Caco-2 (cell line): ENCODE measurements at regions of chr10 and their contacts with region 1.

Region 1: GRCh38 chr10:110857265-110858158 is 14.2 kb upstream of the PDCD4 start:
- DNase-seq: peak; percentile 88 to 90
- H3K4me3 ChIP-seq: no peak overlapping the region
- H3K4me3 Mint-ChIP-seq: peak overlapping the region; percentile 54
- H3K27ac Mint-ChIP-seq: peak overlapping the region; percentile 65
- H3K4me1 ChIP-seq: peaks cover 44% of the 10 kb centered on the region
- H3K4me1 Mint-ChIP-seq: peaks cover 24% of the 10 kb centered on the region
- H3K27me3 ChIP-seq: no peaks in the 10 kb centered on the region
- H3K27me3 Mint-ChIP-seq: no peaks in the 10 kb centered on the region
- CTCF ChIP-seq: no peak

Region 2: GRCh38 chr10:108872854-108873253 is 1984.7 kb before region 1 on chr10:
- CTCF ChIA-PET with region 1: no interaction called
- POLR2A ChIA-PET with region 1: no interaction called
- intact Hi-C with region 1: no loop called
- DNase-seq: no peak
- H3K4me3 ChIP-seq: no peak overlapping the region
- H3K4me3 Mint-ChIP-seq: no peak overlapping the region
- H3K27ac Mint-ChIP-seq: no peak overlapping the region
- H3K4me1 ChIP-seq: no peaks in the 10 kb centered on the region
- H3K4me1 Mint-ChIP-seq: peaks cover 9% of the 10 kb centered on the region
- H3K27me3 ChIP-seq: no peaks in the 10 kb centered on the region
- H3K27me3 Mint-ChIP-seq: peaks cover 7% of the 10 kb centered on the region
- CTCF ChIP-seq: no peak

Region 3: GRCh38 chr10:110774069-110775019 is 83.2 kb before region 1 on chr10:
- CTCF ChIA-PET with region 1: no interaction called
- POLR2A ChIA-PET with region 1: no interaction called
- intact Hi-C with region 1: loop called (anchors 1 kb)
- DNase-seq: peak in 1 of 2 experiments; percentile 35
- H3K4me3 ChIP-seq: no peak overlapping the region
- H3K4me3 Mint-ChIP-seq: peak overlapping the region; percentile 51
- H3K27ac Mint-ChIP-seq: peak overlapping the region; percentile 98
- H3K4me1 ChIP-seq: peaks cover 34% of the 10 kb centered on the region
- H3K4me1 Mint-ChIP-seq: peaks cover 21% of the 10 kb centered on the region
- H3K27me3 ChIP-seq: no peaks in the 10 kb centered on the region
- H3K27me3 Mint-ChIP-seq: no peaks in the 10 kb centered on the region
- CTCF ChIP-seq: no peak

Region 4: DNA sequence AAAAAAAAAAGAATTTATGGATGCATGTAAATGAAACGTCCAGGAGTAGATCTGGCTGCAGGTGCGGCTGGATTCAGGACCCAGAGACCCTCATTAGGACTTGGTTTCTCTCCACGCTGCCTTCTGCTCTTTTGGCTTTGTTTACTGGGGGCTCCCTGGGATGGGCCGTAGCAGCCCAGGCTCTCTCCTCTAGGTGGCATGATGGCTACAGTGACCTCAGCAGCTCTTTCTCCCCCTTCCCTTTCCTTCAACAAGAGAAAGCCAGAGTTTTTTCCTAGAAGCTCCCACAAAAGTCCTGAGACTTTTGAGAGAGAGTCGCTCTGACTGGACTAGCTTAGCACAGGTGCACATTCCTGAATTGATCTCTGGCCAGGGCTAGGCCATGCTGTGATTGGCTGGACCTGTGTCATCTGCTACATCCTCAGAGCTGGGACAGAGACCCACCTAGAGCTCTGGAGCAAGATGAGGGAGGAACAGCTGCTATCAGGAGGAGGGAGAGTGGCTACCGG is 53.6 kb before region 1 on chr10:
- CTCF ChIA-PET with region 1: interaction called, 8 read pairs
- POLR2A ChIA-PET with region 1: interaction called, 4 read pairs
- intact Hi-C with region 1: loop called (anchors 1 kb)
- DNase-seq: peak; percentile 55 to 72
- H3K4me3 ChIP-seq: no peak overlapping the region
- H3K4me3 Mint-ChIP-seq: no peak overlapping the region
- H3K27ac Mint-ChIP-seq: peak overlapping the region; percentile 68
- H3K4me1 ChIP-seq: peaks cover 6% of the 10 kb centered on the region
- H3K4me1 Mint-ChIP-seq: peaks cover 13% of the 10 kb centered on the region
- H3K27me3 ChIP-seq: no peaks in the 10 kb centered on the region
- H3K27me3 Mint-ChIP-seq: peaks cover 3% of the 10 kb centered on the region
- CTCF ChIP-seq: peak; percentile 55 to 92

Region 5: DNA sequence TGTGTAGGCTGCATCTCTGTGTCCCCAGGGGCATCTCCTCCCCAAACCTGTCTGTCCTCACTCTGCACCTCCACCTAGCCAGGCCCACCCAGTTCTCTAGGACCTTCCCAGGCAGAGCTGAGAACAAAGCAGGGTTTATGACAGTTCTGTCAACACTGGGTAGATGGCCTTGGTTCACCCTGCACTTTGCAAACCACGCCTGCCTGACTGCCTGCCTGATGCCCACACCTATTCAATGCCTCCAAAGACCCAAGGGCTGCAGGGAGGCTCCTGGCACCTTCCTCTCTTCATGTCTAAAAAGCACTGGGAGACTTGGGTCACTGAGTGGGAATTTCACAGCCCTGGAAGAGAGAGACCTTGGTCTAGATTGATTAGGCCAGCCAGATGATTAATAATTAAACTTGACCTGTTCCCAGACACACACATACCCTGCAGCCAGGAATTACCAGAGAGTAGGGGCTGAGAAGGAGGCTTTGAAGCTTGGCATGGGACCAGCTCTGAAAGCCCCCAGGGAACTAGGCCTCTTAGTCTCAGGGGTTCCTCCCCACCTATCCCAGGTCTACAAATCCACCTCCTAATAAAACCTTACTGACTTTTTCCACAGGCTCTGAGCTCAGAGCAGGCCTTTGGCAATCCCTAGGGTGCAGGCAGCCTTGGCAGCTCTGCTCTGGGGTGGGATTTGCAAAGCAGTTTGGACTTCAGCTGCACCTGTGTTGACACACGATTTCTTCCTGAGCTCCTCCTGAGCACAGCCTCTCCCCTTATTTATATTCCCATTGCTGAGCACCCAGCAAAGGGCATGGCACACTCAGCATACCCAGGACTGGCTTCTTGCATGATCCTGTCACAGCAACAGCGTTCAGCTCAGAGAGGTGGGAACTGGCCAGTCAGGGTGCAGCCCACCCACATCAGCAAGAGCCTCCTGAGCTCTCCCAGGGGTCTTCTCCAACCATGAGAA is 11.5 kb before region 1 on chr10:
- CTCF ChIA-PET with region 1: interaction called, 6 read pairs
- POLR2A ChIA-PET with region 1: interaction called, 11 read pairs
- intact Hi-C with region 1: no loop called
- DNase-seq: peak; percentile 66 to 67
- H3K4me3 ChIP-seq: no peak overlapping the region
- H3K4me3 Mint-ChIP-seq: no peak overlapping the region
- H3K27ac Mint-ChIP-seq: peak overlapping the region; percentile 45
- H3K4me1 ChIP-seq: peaks cover 17% of the 10 kb centered on the region
- H3K4me1 Mint-ChIP-seq: peaks cover 27% of the 10 kb centered on the region
- H3K27me3 ChIP-seq: no peaks in the 10 kb centered on the region
- H3K27me3 Mint-ChIP-seq: no peaks in the 10 kb centered on the region
- CTCF ChIP-seq: no peak

Region 6: DNA sequence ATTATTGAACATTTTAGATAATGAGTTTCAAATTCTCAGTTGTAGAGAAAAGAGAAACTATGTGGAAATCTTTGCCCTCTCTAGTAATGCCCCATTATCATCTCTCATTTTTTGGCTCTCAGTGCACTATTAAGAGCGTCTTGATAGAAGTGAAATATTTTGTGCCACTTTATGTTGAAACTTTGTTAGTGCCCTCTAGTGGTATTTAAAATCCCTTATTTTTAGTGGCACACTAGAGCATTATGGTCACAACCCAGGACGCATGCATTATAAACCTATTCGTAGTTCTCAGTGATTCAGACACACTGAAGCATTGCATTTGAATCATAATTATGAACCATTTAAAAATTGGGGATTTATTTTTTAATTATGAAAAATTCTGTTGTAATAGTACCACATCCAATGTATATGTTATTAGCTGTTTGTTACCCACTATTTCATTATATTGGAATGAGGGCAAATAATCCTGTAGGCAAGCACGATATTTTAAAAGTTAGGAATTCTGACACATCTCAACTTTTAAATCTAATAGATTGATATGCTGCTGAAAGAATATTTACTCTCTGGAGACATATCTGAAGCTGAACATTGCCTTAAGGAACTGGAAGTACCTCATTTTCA is 36.2 kb after region 1 on chr10:
- CTCF ChIA-PET with region 1: interaction called, 3 read pairs
- POLR2A ChIA-PET with region 1: no interaction called
- intact Hi-C with region 1: loop called (anchors 2 kb)
- DNase-seq: peak in 1 of 2 experiments; percentile 29
- H3K4me3 ChIP-seq: no peak overlapping the region
- H3K4me3 Mint-ChIP-seq: no peak overlapping the region
- H3K27ac Mint-ChIP-seq: no peak overlapping the region
- H3K4me1 ChIP-seq: peaks cover 7% of the 10 kb centered on the region; the same call in 1 of the 2 replicates
- H3K4me1 Mint-ChIP-seq: peaks cover 17% of the 10 kb centered on the region
- H3K27me3 ChIP-seq: no peaks in the 10 kb centered on the region
- H3K27me3 Mint-ChIP-seq: no peaks in the 10 kb centered on the region
- CTCF ChIP-seq: peak; percentile 35 to 48